Activated T-helper 1 cell treated with anti-CD3 and anti-CD28 coated beads, Interleukin-12 subunit alpha, Interleukin-12 subunit beta, Interleukin-2, Interleukin-4 antibody, amounts not matched to agents 30 ng/mL and 10 ng/mL and 1 ng/mL, durations not matched to agents 14 hours and 24 hours and 36 hours (primary cell): ENCODE measurements at regions of chrX and their contacts with region 1.

Region 1: GRCh38 chrX:150486011-150486410 is 82.4 kb upstream of the MTM1 start:
- DNase-seq: peak; percentile 36
- H3K4me3 Mint-ChIP-seq: no peak overlapping the region
- H3K27ac Mint-ChIP-seq: no peak overlapping the region
- H3K4me1 Mint-ChIP-seq: peaks cover 55% of the 10 kb centered on the region
- H3K27me3 Mint-ChIP-seq: no peaks in the 10 kb centered on the region

Region 2: GRCh38 chrX:149938427-149939270 is 547.4 kb before region 1 on chrX and contains the start of gene EOLA2:
- intact Hi-C with region 1: loop called (anchors 10 kb)
- DNase-seq: peak; percentile 89
- H3K4me3 Mint-ChIP-seq: peak within 1 kb of the TSS; percentile 92
- H3K27ac Mint-ChIP-seq: peak within 1 kb of the TSS; percentile 100
- H3K4me1 Mint-ChIP-seq: peaks cover 4% of the 10 kb centered on the region
- H3K27me3 Mint-ChIP-seq: no peaks in the 10 kb centered on the region
- total RNA-seq, gene EOLA2: 54.2 and 63.3 TPM in 2 replicates

Region 3: DNA sequence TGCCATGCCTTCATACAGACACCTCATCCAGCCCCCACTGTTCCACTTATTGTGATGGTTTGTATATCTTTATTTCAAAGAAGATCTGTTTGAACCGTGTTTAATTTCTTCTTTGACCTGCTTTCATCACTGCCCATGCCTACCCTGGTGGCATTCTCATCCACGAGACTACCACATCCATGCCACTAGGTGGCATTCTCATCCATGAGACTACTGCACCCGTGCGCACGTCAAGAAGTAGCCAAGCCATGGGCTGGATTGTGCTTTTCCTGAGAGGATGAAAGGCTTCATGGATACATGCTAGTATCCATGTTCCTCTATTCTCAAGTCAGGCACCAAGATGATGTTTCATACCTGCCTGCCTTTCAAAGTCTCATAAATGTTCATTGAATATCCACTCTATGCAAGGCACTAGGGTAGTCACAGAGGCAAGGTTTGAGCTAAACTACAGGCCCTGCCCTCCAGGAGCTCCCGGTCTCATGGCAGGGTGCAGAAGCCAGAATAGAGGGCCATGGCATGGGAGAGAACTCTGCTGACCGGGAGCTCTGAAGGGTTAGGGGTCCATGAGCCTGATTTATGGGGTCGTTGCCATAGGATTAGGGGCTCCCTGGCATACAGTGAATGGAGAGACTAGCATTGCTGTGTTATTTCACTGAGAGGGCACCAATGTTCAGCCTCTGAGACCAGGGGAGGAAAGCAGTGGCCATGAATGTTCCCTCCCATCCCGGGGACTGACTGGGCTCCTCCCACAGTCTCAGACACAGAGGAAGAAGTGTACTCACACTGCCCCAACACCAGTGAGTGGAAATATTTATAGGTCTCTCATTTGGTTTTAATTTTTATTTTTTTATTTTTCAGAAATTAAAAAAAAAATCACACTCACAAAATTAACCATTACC is 522.9 kb before region 1 on chrX:
- intact Hi-C with region 1: loop called (anchors 1 kb)
- DNase-seq: no peak
- H3K4me3 Mint-ChIP-seq: no peak overlapping the region
- H3K27ac Mint-ChIP-seq: no peak overlapping the region
- H3K4me1 Mint-ChIP-seq: no peaks in the 10 kb centered on the region
- H3K27me3 Mint-ChIP-seq: no peaks in the 10 kb centered on the region

Region 4: GRCh38 chrX:150219374-150220185 is 266.4 kb before region 1 on chrX:
- intact Hi-C with region 1: no loop called
- DNase-seq: no peak
- H3K4me3 Mint-ChIP-seq: no peak overlapping the region
- H3K27ac Mint-ChIP-seq: no peak overlapping the region
- H3K4me1 Mint-ChIP-seq: no peaks in the 10 kb centered on the region
- H3K27me3 Mint-ChIP-seq: no peaks in the 10 kb centered on the region

Region 5: DNA sequence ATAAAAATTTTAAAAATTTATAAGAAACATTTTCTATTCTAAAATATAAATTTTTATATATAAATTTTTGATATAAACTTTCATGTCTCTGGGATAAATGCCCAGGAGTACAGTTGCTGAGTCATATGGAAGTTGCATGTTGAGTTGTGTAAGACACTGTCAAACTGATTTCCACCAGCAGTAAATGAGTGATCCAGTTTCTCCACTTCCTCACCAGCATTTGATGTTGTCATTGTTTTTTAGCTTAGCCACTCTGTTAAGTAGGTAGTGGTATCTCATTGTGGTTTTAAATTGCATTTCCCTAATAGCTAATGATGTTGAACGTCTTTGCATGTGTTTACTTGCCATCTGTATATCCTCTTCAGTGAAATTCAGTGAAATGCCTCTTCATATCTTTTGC is 56.4 kb before region 1 on chrX:
- intact Hi-C with region 1: loop called (anchors 2 kb)
- DNase-seq: no peak
- H3K4me3 Mint-ChIP-seq: no peak overlapping the region
- H3K27ac Mint-ChIP-seq: no peak overlapping the region
- H3K4me1 Mint-ChIP-seq: peaks cover 10% of the 10 kb centered on the region
- H3K27me3 Mint-ChIP-seq: no peaks in the 10 kb centered on the region

Region 6: GRCh38 chrX:150504397-150505182 is 18.6 kb after region 1 on chrX:
- intact Hi-C with region 1: no loop called
- DNase-seq: no peak
- H3K4me3 Mint-ChIP-seq: no peak overlapping the region
- H3K27ac Mint-ChIP-seq: no peak overlapping the region
- H3K4me1 Mint-ChIP-seq: peaks cover 11% of the 10 kb centered on the region
- H3K27me3 Mint-ChIP-seq: no peaks in the 10 kb centered on the region

Region 7: DNA sequence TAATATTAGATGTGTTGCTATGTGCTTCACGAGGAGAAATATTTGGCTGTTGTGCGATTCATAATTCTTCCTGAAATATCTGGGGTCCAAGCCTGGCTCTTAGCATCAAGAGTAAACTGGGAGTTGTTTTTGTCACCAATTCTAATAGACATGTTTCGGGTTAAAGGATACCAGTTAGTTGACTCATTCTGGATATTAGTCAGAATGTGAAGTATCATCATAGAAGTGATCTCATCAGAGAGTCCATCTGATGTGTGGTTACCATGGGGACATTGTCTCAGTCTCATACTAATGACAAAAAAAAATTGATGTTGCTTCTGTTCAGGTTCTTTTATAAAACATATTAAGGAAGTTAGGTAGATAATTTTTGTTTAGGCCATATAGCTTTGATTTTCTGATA is 149.9 kb after region 1 on chrX:
- intact Hi-C with region 1: loop called (anchors 1 kb)
- DNase-seq: no peak
- H3K4me3 Mint-ChIP-seq: no peak overlapping the region
- H3K27ac Mint-ChIP-seq: peak overlapping the region; percentile 78
- H3K4me1 Mint-ChIP-seq: peaks cover 7% of the 10 kb centered on the region
- H3K27me3 Mint-ChIP-seq: no peaks in the 10 kb centered on the region